ENCODE measurements at regions of chrX and their contacts with region 1.

Region 1: GRCh38 chrX:72347366-72347765 is 41.7 kb upstream of the CITED1 start:
- DNase-seq: no peak
- ATAC-seq: no peak
- H3K4me3 ChIP-seq: no peak overlapping the region
- H3K27ac ChIP-seq: no peak overlapping the region
- H3K4me1 ChIP-seq: no peaks in the 10 kb centered on the region
- H3K27me3 ChIP-seq: no peaks in the 10 kb centered on the region
- CTCF ChIP-seq: no peak

Region 2: DNA sequence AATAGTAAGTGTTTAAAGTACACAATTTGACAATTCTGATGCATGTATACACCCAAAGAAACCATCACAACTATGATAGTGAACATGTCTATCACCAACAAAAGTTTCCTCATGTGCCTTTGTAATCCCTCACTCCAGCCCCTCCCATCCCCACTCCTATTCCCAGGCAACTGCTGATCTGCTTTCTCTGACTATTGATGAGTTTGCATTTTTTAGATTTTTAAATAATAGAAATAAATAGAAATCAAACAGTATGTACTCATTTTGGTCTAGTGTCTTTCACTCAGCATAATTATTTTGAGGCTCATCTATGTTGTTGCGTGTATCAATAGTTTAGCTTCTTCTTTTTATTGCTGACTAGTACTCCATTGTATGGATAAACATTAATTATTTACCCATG is 65.1 kb before region 1 on chrX:
- CTCF ChIA-PET with region 1: no interaction called
- POLR2A ChIA-PET with region 1: interaction called, 17 read pairs
- in situ Hi-C with region 1: no loop called
- intact Hi-C with region 1: no loop called
- DNase-seq: no peak
- ATAC-seq: no peak
- H3K4me3 ChIP-seq: no peak overlapping the region
- H3K27ac ChIP-seq: no peak overlapping the region
- H3K4me1 ChIP-seq: no peaks in the 10 kb centered on the region
- H3K27me3 ChIP-seq: no peaks in the 10 kb centered on the region
- CTCF ChIP-seq: no peak

Measured in Panc1 (cell line).